IMR-90 (cell line): ENCODE measurements at regions of chr9 and their contacts with region 1.

Region 1: DNA sequence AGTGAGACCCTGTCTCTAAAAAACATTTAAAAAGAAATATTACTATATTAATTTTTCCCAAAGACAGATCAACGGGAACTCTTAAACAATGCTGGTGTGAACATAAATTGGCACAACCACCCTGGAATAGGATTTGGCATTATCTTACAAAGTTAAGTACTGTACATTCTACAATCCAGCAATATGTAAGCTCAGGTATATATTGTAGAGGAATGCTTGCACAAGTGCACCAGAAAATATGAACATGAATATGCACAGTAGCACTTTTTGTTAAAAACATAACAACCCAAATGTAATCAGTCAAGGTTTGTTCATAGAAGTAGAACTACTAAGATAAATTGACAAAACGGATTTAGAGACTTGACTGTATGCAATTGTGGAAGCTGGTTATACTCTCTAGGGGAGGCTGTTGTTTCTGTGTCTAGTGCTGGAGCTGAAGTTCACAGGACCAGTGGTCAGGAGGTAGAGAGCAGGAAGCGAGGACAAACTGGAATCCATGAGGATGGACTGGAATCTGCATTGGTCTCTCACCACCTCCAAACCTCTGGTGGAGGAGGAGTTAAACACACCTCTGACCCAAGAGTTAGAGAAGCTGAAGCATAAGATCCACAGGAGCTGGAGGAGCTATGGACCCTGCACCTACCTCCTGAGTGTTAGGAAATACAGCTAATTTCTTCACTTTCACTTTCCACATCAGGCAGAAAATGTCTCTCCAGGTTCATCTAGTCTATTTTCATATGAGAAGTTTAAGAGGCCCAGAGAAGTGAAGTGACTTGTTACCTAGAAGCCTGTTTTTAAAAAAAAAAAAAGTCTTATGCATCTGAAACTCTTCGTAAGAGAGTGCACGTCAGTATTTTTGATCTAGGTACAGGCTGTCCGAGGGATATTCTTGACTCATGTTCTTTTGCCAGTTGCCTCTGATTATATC is 20.3 kb upstream of the RIC1 start:
- DNase-seq: no peak
- ATAC-seq: peak; percentile 14; the same call in 1 of the 2 replicates
- H3K4me3 ChIP-seq: no peak overlapping the region
- H3K27ac ChIP-seq: no peak overlapping the region
- H3K4me1 ChIP-seq: no peaks in the 10 kb centered on the region
- H3K27me3 ChIP-seq: no peaks in the 10 kb centered on the region
- CTCF ChIP-seq: no peak
- POLR2A ChIP-seq: no peak
- RAD21 ChIP-seq: no peak

Region 2: DNA sequence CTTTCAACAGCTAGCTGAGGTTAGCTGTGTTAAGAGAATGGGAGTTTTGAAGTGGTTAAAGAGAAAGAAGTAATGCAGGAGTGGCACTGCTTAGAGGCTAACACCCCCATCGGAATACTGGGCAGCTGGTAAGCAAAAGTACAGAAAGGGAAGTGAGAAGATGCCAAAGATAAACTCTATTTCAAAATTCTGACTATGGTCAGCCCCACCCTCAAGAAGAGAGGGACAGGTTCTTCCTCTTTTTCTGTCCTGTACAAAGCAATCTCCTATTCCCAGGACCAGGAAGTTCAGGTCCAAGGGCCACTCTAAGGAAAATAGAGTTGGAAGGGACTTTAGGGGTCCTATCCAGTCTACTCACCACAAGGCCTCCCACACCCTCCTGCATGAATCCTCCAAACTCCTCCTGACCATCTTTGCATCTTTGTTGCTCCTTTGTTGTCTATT is 669.4 kb before region 1 on chr9:
- CTCF ChIA-PET with region 1: no interaction called
- POLR2A ChIA-PET with region 1: no interaction called
- dilution Hi-C with region 1: no loop called
- in situ Hi-C with region 1: no loop called
- intact Hi-C with region 1: no loop called
- DNase-seq: no peak
- ATAC-seq: no peak
- H3K4me3 ChIP-seq: no peak overlapping the region
- H3K27ac ChIP-seq: no peak overlapping the region
- H3K4me1 ChIP-seq: no peaks in the 10 kb centered on the region
- H3K27me3 ChIP-seq: no peaks in the 10 kb centered on the region; the same call in 1 of the 2 replicates
- CTCF ChIP-seq: no peak
- POLR2A ChIP-seq: no peak
- RAD21 ChIP-seq: no peak

Region 3: DNA sequence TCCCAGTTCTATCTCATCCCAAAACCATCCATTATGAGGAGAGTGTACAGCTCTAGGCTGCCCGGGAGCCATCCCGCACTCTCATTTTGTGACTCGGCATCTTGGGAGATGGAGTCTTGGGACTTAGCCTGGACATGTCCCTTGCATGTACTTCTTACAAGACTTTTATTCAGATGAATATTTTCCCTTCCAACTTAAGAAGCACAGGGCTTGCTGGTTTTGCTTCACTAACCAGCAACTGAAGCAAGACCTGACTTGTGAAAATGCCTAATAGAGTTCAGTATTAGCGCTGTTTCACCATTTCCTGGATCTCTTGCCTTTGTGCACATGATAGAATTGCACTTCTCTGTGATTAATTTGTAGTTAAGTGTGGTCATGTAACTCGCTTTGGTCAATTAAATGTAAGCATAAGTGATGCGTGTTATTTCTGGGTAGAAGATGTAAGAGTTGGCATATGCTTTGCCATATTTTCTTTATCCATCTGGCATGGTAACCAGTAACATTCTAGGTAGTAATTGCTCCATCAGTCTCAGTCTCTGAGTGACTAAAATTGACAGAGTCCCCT is 42.4 kb before region 1 on chr9:
- CTCF ChIA-PET with region 1: no interaction called
- POLR2A ChIA-PET with region 1: no interaction called
- dilution Hi-C with region 1: no loop called
- in situ Hi-C with region 1: no loop called
- intact Hi-C with region 1: no loop called
- DNase-seq: no peak
- ATAC-seq: no peak
- H3K4me3 ChIP-seq: no peak overlapping the region
- H3K27ac ChIP-seq: no peak overlapping the region
- H3K4me1 ChIP-seq: peaks cover 3% of the 10 kb centered on the region; the same call in 1 of the 2 replicates
- H3K27me3 ChIP-seq: no peaks in the 10 kb centered on the region
- CTCF ChIP-seq: no peak
- POLR2A ChIP-seq: no peak
- RAD21 ChIP-seq: no peak

Region 4: DNA sequence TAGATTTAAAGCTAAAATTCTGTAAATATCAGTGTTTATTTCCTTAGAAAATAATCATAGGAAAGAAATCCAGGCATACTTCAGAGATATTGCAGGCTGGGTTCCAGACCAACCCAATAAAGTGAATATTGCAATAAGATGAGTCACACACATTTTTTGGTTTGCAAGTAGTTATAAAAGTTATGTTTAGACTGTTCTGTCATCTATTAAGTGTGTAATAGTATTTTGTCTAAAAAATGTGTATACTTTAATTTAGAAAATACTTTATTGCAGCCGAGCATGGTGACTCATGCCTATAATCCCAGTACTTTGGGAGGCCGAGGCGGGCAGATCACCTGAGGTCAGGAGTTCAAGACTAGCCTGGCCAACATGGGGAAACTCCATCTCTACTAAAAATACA is 13.5 kb after region 1 on chr9:
- CTCF ChIA-PET with region 1: no interaction called
- POLR2A ChIA-PET with region 1: no interaction called
- dilution Hi-C with region 1: no loop called
- in situ Hi-C with region 1: no loop called
- intact Hi-C with region 1: no loop called
- DNase-seq: peak; percentile 91
- ATAC-seq: peak; percentile 76
- H3K4me3 ChIP-seq: no peak overlapping the region
- H3K27ac ChIP-seq: 0 out of 2 replicates have a peak overlapping the region, but pooled peaks have one; percentile 89
- H3K4me1 ChIP-seq: peaks cover 2% of the 10 kb centered on the region
- H3K27me3 ChIP-seq: no peaks in the 10 kb centered on the region
- CTCF ChIP-seq: no peak
- POLR2A ChIP-seq: no peak
- RAD21 ChIP-seq: no peak

Region 5: DNA sequence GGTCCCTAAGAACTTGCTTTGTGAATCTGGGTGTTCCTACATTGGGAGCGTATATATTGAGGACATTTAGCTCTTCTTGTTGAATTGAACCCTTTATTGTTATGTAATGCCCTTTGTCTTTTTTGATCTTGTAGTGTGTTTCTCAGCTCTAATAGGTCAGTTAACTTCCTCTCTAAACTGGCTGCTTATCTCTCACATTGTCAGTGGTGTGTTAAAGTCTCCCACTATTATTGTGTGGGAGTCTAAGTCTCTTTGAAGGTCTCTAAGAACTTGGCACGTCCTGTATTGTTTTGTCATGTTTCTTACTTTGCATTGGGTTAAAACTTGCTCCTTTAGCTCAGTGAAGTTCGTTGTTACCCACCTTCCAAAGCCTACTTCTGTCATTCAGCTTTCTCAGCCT is 56.5 kb after region 1 on chr9:
- CTCF ChIA-PET with region 1: no interaction called
- POLR2A ChIA-PET with region 1: no interaction called
- dilution Hi-C with region 1: no loop called
- in situ Hi-C with region 1: loop called (anchors 10 kb)
- intact Hi-C with region 1: no loop called
- DNase-seq: no peak
- ATAC-seq: no peak
- H3K4me3 ChIP-seq: no peak overlapping the region
- H3K27ac ChIP-seq: no peak overlapping the region
- H3K4me1 ChIP-seq: no peaks in the 10 kb centered on the region
- H3K27me3 ChIP-seq: no peaks in the 10 kb centered on the region
- CTCF ChIP-seq: no peak
- POLR2A ChIP-seq: no peak
- RAD21 ChIP-seq: no peak